ENCODE measurements at regions of chr21 and their contacts with region 1.

Region 1: GRCh38 chr21:42737951-42738590 is 84.7 kb downstream of the PDE9A start:
- DNase-seq: peak; percentile 80
- H3K4me3 Mint-ChIP-seq: peak overlapping the region; percentile 76
- H3K27ac Mint-ChIP-seq: peak overlapping the region; percentile 98
- H3K4me1 Mint-ChIP-seq: peaks cover 52% of the 10 kb centered on the region
- H3K27me3 Mint-ChIP-seq: no peaks in the 10 kb centered on the region

Region 2: GRCh38 chr21:42614811-42615659 is 123.0 kb before region 1 on chr21:
- intact Hi-C with region 1: loop called (anchors 10 kb)
- DNase-seq: peak; percentile 87
- H3K4me3 Mint-ChIP-seq: no peak overlapping the region
- H3K27ac Mint-ChIP-seq: no peak overlapping the region
- H3K4me1 Mint-ChIP-seq: peaks cover 7% of the 10 kb centered on the region
- H3K27me3 Mint-ChIP-seq: peaks cover 14% of the 10 kb centered on the region

Region 3: DNA sequence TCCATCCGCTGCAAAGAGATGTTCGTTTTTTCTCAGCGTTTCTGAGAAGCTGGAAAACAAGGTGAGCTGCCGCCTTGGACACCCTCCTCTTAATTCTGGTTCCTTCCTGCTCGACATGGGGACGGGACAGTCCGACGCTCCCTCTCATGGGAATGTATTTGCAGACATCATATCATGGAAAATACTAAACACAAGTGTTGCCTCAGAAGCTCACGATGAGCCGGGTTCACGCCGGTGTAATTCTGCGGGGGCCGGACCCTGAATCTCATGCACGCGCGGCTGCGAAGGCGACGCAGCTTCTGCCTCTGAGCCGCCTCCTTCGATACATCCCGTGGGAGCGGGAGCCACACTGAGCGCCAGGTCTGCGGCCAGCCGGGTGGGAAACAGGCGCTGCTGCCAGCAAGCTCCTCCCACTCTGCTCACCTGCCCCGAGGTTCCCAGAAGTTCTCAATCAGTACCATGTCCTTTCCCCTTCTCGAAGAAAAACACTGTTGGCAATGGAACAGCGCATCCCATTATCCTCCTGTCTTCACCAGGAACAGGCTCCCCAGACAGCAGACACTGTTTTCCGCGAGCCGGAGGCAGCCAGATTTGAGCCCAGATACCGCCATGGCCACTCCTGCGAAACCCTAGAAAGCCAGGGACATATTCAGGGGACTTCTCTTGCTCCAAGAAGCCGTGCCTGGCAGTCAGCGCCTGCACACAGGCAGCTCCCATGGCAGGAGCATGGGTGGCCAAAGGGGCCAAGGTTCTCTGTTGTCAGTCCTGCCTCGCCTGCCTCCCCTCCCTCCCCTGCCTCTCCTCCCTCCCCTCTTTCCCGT is 43.3 kb after region 1 on chr21:
- intact Hi-C with region 1: loop called (anchors 5 kb)
- DNase-seq: no peak
- H3K4me3 Mint-ChIP-seq: peak overlapping the region; percentile 29
- H3K27ac Mint-ChIP-seq: no peak overlapping the region
- H3K4me1 Mint-ChIP-seq: peaks cover 31% of the 10 kb centered on the region
- H3K27me3 Mint-ChIP-seq: peaks cover 30% of the 10 kb centered on the region

Region 4: GRCh38 chr21:42939582-42940410 is 201.7 kb after region 1 on chr21:
- intact Hi-C with region 1: no loop called
- DNase-seq: no peak
- H3K4me3 Mint-ChIP-seq: no peak overlapping the region
- H3K27ac Mint-ChIP-seq: no peak overlapping the region
- H3K4me1 Mint-ChIP-seq: no peaks in the 10 kb centered on the region
- H3K27me3 Mint-ChIP-seq: peaks cover 5% of the 10 kb centered on the region

Region 5: DNA sequence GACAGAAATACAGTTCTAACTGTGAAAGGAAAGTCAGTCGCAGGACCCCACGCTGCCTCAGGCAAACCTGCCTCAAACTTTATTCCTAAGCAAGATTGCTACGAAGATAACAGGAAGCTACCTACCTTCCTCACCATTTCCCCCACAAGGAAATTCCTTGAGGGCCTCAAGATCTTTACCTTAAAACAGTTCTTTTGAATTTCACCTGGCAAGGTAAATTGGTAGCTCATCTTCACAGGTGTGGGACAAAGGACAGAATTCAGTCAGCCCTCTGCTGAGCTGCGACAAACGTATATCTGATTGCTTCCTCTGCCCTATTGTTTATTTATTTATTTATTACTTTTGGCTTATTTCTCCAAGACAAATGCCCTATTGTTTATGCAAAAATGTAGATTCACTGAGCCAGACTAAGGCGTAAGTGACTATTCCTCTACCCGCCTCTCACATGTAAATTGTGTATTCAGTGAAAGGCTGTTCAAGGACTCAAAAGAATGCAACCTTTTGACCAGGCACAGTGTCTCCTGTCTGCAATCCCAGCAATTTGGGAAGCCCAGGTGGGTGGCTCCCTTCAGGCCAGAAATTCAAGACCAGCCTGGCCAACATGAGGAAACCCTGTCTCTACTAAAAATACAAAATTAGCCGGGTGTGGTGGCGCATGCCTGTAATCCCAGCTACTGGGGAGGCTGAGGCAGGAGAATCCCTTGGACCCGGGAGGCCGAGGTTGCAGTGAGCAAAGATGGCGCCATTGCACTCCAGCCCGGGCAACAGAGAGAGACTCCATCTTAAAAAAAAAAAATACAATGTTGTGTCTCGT is 219.0 kb after region 1 on chr21:
- intact Hi-C with region 1: no loop called
- DNase-seq: no peak
- H3K4me3 Mint-ChIP-seq: no peak overlapping the region
- H3K27ac Mint-ChIP-seq: no peak overlapping the region
- H3K4me1 Mint-ChIP-seq: no peaks in the 10 kb centered on the region
- H3K27me3 Mint-ChIP-seq: peaks cover 1% of the 10 kb centered on the region

Measured in activated CD4-positive, alpha-beta T cell treated with anti-CD3 and anti-CD28 coated beads, Interleukin-2, amount 10 ng/mL, durations not matched to agents 24 days and 14 days (primary cell).